GM18951 (cell line): ENCODE measurements at regions of chr11 and their contacts with region 1.

Region 1: DNA sequence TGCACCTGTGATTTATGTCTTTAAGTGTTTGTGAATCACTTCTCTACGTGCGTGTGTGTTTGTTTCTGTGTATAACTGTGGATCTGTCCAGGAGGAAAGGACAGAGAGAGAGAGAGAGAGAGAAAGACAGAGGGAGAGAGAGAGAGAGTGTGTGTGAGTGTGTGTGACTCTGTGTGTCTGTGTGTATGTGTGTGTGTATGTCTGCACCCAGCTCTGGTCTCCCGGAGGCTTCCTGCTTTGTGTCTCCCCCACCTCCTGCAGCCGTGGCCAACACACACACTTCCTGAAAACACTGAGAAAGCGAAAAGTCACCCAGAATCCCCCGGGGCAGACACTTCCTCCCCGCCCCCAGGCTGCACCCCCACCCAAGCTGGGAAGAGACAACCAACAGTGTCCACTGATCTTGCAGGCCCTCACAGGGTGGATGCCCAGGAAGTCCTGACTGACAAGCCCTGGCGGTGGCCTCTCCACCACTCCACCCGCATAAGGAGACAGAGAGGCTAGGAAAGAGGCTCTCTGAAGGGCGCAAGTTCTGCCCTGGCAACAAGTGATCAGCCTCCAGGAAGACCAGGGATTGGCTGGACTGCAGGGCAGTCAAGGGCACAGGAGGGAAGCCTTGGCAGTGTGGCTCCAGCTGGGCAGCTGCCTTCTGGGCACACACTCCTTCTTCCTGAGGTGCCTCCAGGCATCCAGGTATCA is 30.0 kb downstream of the ARAP1 start:
- POLR2A ChIP-seq: peak; percentile 69

Region 2: DNA sequence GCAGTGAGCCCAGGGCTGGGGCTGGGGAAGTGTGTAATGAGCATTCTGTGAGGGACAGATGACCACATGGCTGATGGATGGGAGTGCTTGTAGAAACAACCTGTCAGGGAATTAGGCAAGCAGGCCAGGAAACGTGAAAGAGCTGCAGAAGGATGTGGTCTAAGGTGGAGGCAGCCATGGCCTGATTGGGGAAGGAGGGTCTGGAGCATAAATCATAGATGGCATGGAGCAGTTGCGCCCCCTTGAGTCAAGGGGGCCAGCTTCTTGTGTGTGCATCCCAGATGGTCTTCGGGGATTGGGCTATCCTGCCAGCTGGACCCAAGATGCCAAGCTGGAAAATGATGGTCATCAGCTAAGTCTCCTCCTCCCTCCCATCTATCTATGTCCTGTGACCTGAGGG is 168.5 kb before region 1 on chr11:
- in situ Hi-C with region 1: no loop called
- POLR2A ChIP-seq: no peak

Region 3: GRCh38 chr11:72799441-72799840 is 77.2 kb after region 1 on chr11:
- in situ Hi-C with region 1: loop called (anchors 5 kb)
- POLR2A ChIP-seq: no peak

Region 4: DNA sequence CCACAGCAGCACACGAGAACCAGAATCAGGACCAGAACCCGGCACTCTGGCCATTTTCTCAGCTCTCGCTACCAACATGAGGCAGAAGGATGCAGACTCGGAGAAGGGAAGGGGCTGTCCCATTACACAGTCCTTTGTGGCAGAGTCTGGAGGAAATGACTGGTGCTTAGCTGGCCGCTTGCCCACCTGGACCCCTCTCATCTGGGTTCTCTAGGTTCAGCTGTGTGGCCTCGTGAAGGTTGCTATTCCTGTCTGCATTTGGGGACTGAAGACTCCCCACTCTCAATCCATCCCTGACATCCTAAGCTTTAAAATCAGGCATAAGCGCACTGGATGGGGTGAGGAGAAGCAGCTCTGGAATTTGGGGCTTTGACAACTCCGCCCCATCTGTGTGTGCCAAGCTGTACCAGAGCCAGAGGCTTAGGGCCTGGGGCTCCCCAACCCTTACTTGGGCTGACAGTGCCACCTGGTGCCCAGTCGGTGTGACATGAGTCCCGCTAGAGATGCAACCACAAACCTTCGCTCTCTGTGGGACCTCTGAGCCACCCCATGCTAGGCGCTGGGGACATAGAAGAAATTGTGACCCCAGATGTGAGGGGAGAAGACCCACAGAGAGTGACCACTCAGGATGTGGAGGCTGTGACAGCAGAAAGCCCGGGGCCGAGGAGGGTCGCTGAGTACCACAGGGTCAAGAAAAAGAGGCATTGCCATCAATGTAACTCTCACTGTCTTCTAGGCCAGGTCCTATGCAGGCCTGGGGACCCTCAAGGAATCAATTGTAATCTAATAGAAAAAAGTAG is 455.8 kb after region 1 on chr11:
- in situ Hi-C with region 1: loop called (anchors 10 kb)
- POLR2A ChIP-seq: no peak